ENCODE measurements at regions of chr17 and their contacts with region 1.

Region 1: GRCh38 chr17:48593840-48594537 is 410 bp upstream of the HOXB5 start:
- DNase-seq: peak; percentile 78
- H3K4me3 ChIP-seq: no peak overlapping the region
- H3K27ac ChIP-seq: no peak overlapping the region
- H3K4me1 ChIP-seq: peaks cover 6% of the 10 kb centered on the region
- CTCF ChIP-seq: peak; percentile 85

Region 2: GRCh38 chr17:48259694-48260291 is 334.2 kb before region 1 on chr17:
- CTCF ChIA-PET with region 1: no interaction called
- POLR2A ChIA-PET with region 1: no interaction called
- intact Hi-C with region 1: loop called (anchors 10 kb)
- DNase-seq: peak; percentile 41
- H3K4me3 ChIP-seq: no peak overlapping the region
- H3K27ac ChIP-seq: no peak overlapping the region
- H3K4me1 ChIP-seq: no peaks in the 10 kb centered on the region
- CTCF ChIP-seq: peak; percentile 85

Region 3: GRCh38 chr17:48335858-48336500 is 258.0 kb before region 1 on chr17:
- CTCF ChIA-PET with region 1: no interaction called
- POLR2A ChIA-PET with region 1: interaction called, 3 read pairs
- intact Hi-C with region 1: loop called (anchors 1 kb)
- DNase-seq: peak; percentile 71
- H3K4me3 ChIP-seq: no peak overlapping the region
- H3K27ac ChIP-seq: no peak overlapping the region
- H3K4me1 ChIP-seq: no peaks in the 10 kb centered on the region
- CTCF ChIP-seq: peak; percentile 97

Region 4: GRCh38 chr17:48756830-48757251 is 162.9 kb after region 1 on chr17:
- CTCF ChIA-PET with region 1: no interaction called
- POLR2A ChIA-PET with region 1: no interaction called
- intact Hi-C with region 1: no loop called
- DNase-seq: no peak
- H3K4me3 ChIP-seq: no peak overlapping the region
- H3K27ac ChIP-seq: no peak overlapping the region
- H3K4me1 ChIP-seq: no peaks in the 10 kb centered on the region
- CTCF ChIP-seq: no peak